T-cell (primary cell): ENCODE measurements at regions of chr11 and their contacts with region 1.

Region 1: DNA sequence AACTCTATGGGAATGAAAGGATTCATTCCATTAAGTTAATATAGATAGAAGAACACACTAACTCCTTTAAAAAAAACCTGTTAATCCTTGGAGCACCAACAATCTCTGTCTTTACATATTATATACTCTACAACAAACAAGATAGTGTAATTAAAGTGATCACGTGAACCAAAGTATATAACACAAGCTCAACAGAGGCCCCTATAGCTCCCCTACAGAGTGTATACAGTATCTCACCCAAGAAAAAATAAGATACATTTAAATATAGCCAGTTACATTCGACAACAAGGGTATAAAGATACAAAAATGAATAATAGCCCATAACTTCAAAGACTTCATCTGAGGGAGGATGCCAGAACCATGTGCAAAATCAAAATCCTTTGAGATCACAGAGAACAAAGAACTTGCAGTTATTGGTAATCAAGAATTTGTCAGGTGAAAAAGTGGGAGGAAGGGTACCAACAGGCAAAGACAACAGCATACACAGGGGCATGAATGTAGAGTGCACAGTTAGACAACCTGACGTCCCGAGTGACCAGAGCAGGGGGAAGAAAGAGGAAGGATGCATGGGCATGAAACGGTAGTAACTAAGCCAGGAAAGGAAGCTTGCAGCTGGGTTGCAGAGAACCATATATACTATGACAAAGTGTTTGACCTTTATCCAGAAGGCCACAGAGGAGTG is 4.7 kb downstream of the FCHSD2 start:
- DNase-seq: no peak
- ATAC-seq: no peak
- H3K4me3 ChIP-seq: no peak overlapping the region
- H3K4me3 Mint-ChIP-seq: peak overlapping the region in 1 of 3 donors; percentile 8
- H3K27ac ChIP-seq: no peak overlapping the region
- H3K27ac Mint-ChIP-seq: peak overlapping the region; percentile 42 to 65
- H3K4me1 ChIP-seq: peaks cover 6 to 18% of the 10 kb centered on the region in 2 experiments
- H3K4me1 Mint-ChIP-seq: peaks cover 43 to 55% (median 43%) of the 10 kb centered on the region in 3 donors
- H3K27me3 ChIP-seq: no peaks in the 10 kb centered on the region
- H3K27me3 Mint-ChIP-seq: no peaks in the 10 kb centered on the region

Region 2: GRCh38 chr11:74988541-74989260 is 1851.3 kb after region 1 on chr11 and contains the start of gene NEU3:
- CTCF ChIA-PET with region 1: no interaction called
- POLR2A ChIA-PET with region 1: interaction called in 1 of 2 experiments, 11 read pairs
- DNase-seq: peak; percentile 59 to 89 (median 82)
- ATAC-seq: peak; percentile 97 to 98 (median 98)
- H3K4me3 ChIP-seq: peak within 1 kb of the TSS; percentile 70
- H3K4me3 Mint-ChIP-seq: peak within 1 kb of the TSS; percentile 92 to 95 (median 94)
- H3K27ac ChIP-seq: peak within 1 kb of the TSS; percentile 59
- H3K27ac Mint-ChIP-seq: peak within 1 kb of the TSS; percentile 89 to 90
- H3K4me1 ChIP-seq: peaks cover 8 to 17% of the 10 kb centered on the region in 2 experiments
- H3K4me1 Mint-ChIP-seq: peaks cover 31 to 34% (median 33%) of the 10 kb centered on the region in 3 donors
- H3K27me3 ChIP-seq: no peaks in the 10 kb centered on the region
- H3K27me3 Mint-ChIP-seq: no peaks in the 10 kb centered on the region
- total RNA-seq, gene NEU3: 12.4 to 18.0 (median 13.0) TPM